Aorta (tissue), 5 donors: ENCODE measurements at regions of chr1 and their contacts with region 1.

Region 1: DNA sequence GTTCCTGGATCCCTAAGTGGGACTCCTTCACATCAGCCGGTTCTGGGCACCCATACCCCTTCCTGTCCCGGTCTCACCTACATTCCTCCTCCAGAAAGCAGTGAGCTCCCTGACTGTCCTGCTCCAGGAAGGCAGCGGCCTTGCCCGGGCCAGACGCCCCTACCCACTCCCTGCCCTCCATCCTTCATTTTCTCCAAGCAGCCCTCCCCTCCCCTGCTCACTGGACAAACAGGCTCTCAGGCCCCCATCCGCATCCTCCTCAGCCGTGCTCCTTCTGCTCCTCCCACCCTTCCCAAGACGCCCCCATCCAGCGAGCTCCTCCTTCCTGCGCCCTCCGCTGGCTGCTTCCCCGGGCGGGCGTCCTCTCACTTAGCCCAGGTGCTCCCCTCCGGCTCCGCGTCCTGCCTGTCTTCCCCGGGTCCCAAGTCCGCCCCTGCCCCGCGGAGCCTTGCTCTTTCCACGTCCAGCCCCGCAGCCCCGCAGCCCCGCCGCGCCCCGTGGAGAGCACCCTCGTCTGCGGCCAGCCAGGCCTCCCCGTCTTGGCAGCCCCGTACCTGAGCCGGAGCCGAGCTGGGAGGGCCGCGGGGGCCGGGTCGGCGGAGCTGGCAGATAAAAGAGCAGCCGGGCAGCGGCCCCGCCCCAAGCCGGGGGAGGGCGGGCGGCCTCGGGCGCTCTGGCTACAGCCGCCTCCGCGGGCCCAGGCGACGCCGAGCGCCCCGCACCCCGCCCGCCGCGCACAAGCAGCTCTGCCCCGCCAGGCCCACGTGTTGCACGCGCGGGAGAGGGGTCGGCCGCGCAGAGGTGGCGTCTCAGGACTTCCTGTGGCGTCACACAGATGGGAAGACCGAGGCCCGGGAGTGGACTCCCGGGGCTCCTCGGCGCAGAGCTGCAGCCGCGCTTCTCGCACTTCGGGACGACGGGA is at the start of gene PAQR7:
- DNase-seq: peak; percentile 87 to 90
- ATAC-seq: peak; percentile 92
- H3K4me3 ChIP-seq: peak within 1 kb of the TSS; percentile 54 to 73
- H3K27ac ChIP-seq: peak within 1 kb of the TSS in 1 of 2 donors; percentile 13
- H3K4me1 ChIP-seq: no peaks in the 10 kb centered on the region
- H3K27me3 ChIP-seq: no peaks in the 10 kb centered on the region
- total RNA-seq, gene PAQR7: 6.4 to 11.3 TPM

Region 2: DNA sequence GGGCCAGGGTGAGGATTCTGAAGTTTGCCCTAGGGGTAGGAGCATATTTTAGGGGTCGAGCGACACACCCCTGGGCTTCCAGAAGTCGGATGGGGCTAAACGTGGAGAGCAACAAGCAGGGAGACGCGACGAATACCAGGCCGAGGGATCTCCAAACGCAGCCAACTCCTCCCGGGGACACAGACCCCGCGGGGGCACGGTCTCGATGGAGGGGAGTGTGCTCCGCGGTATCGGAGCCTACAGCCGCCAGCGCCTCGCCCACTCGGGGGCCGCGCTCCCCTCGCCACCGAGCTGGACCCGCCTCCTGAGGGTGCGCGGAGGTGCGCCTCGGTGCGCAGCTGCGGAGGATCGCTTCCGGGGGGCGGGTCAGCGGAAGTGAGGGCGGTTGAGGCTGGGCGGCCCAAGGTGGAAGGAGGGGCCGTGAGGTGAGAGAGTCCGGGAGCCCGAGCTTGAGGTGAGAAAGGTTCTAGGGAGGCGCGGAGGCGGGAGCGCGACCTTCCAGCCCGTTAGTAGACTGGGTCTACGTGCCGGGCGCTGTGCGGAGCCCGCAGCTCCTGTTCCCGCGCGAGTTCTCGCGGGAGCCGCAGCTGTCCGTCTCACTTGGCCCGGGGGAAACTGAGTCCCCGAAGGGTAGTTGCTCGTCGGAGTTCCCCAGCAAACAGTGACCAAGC is 55.5 kb before region 1 on chr1 and contains the start of gene MTFR1L:
- intact Hi-C with region 1: no loop called
- DNase-seq: peak; percentile 93 to 96
- ATAC-seq: peak; percentile 94
- H3K4me3 ChIP-seq: peak within 1 kb of the TSS; percentile 77 to 88
- H3K27ac ChIP-seq: peak within 1 kb of the TSS in 1 of 2 donors; percentile 80
- H3K4me1 ChIP-seq: no peaks in the 10 kb centered on the region
- H3K27me3 ChIP-seq: no peaks in the 10 kb centered on the region
- total RNA-seq, gene MTFR1L: 54.0 to 59.6 TPM

Region 3: DNA sequence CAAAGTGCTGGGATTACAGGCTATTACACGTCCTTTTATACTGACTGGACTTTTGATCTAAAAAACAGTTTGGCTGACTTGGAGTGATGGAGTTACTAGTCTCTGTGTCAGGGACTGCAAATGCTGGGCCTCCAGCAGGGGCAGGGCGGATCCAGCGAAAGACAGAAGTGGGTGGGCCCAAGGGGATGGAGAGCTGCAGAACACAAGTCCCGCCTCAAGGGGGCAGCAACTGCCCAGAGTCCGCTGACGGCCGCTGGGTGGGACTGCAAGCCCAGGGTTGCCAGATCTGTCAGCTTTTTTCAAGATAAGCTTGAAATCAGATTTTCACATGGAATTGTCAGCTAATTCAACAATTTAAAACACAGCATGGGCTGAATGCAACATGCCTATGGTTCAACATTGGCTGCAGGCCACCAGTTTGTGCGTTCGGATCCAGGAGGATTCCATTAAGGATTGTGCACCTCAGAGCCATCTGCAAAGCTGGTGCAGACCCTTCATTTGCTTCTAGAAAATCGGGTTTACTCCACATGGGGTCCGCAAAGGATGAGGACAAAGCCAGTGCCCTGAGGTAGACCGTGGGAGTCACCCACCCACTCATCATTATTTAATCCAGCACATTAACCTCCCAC is 20.3 kb after region 1 on chr1:
- intact Hi-C with region 1: loop called in 1 of 2 experiments (anchors 1 kb)
- DNase-seq: peak; percentile 94 to 96
- ATAC-seq: peak; percentile 96
- H3K4me3 ChIP-seq: no peak overlapping the region
- H3K27ac ChIP-seq: no peak overlapping the region
- H3K4me1 ChIP-seq: no peaks in the 10 kb centered on the region
- H3K27me3 ChIP-seq: no peaks in the 10 kb centered on the region

Region 4: DNA sequence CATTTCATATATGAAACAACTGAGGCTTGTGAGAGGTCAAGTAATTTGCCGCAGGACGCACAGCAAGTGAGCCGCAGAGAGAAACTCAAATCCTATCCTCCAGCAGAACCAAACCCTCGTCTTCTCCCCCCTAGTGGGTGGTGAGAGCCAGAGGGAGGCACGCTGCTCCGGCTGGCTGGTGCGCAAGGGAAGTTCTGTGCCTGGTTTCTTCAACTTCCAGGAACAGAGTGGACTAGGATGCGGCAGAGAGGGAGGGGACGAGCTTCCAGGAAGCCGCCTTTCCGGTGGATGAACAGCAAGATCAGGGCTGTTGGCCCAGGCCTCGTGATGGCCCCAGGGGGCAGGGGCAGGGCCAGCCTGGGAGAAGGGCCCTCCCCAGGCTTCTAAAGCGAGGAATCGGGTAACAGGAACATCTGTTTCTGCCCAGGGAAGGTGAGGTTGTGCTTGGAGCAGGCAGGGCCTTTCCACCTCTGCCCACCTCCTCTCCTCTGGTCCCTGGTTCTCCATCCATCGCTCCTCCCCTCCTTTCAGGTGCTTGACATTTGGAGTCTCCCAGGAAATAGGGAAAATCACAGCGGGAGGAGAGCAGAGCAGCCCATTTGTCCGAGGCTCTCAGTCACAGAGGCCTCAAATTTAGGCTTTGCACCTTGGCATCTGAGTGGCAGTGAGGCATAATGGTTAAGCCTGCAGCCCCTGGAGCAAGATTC is 219.6 kb after region 1 on chr1:
- intact Hi-C with region 1: no loop called
- DNase-seq: peak; percentile 50 to 75
- ATAC-seq: no peak
- H3K4me3 ChIP-seq: no peak overlapping the region
- H3K27ac ChIP-seq: no peak overlapping the region
- H3K4me1 ChIP-seq: no peaks in the 10 kb centered on the region
- H3K27me3 ChIP-seq: no peaks in the 10 kb centered on the region

Region 5: GRCh38 chr1:27216466-27216865 is 1341.3 kb after region 1 on chr1:
- intact Hi-C with region 1: no loop called
- DNase-seq: peak in 1 of 2 donors; percentile 24
- ATAC-seq: no peak
- H3K4me3 ChIP-seq: no peak overlapping the region
- H3K27ac ChIP-seq: no peak overlapping the region
- H3K4me1 ChIP-seq: no peaks in the 10 kb centered on the region
- H3K27me3 ChIP-seq: no peaks in the 10 kb centered on the region